Activated CD8-positive, alpha-beta memory T cell treated with anti-CD3 and anti-CD28 coated beads, Interleukin-2, amount 10 ng/mL, durations not matched to agents 7 days and 5 days (primary cell): ENCODE measurements at regions of chr3 and their contacts with region 1.

Region 1: DNA sequence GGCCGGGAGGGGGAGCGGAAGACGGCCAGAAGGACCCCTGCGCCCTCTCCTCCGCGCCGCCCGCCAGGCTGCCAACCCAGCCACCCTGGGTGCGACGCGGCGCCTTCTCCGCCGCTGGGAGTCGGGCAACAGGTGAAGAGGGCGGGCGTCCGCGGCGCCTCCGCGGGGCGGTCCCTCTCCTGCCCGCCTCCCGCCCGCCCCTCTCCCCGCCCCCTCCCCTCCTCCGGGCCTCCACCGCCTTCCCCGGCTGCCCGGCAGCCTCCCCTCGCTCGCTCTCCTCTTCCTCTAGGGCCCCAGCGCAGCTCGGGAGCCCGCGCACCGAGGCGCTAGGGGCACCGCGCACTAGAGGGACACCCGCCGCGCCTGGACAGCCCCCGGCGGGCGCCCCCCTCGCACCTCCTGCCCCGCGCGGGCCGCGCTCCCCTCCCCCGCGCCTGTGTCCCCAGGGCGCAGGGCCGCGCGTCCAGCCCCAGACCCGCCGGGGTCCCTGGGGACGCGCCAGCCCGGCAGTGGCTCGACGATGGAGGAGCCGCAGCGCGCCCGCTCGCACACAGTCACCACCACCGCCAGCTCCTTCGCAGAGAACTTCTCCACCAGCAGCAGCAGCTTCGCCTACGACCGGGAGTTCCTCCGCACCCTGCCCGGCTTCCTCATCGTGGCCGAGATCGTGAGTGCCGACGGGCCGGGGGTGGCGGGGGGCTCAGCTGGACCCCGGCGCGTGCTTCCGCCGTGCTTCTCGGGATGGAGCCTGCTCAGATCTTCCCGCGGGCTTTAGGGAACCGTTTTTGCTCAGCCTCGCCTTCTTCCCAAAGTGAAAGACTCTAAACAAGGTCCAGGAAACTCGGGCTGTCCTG is at the start of gene CMTM8:
- DNase-seq: peak; percentile 57
- ATAC-seq: peak; percentile 87
- H3K4me3 Mint-ChIP-seq: peak within 1 kb of the TSS; percentile 77
- H3K27ac Mint-ChIP-seq: no peak within 1 kb of the TSS
- H3K4me1 Mint-ChIP-seq: peaks cover 13% of the 10 kb centered on the region
- H3K27me3 Mint-ChIP-seq: peaks cover 28% of the 10 kb centered on the region
- total RNA-seq, gene CMTM8: 4.0 to 4.4 TPM

Region 2: DNA sequence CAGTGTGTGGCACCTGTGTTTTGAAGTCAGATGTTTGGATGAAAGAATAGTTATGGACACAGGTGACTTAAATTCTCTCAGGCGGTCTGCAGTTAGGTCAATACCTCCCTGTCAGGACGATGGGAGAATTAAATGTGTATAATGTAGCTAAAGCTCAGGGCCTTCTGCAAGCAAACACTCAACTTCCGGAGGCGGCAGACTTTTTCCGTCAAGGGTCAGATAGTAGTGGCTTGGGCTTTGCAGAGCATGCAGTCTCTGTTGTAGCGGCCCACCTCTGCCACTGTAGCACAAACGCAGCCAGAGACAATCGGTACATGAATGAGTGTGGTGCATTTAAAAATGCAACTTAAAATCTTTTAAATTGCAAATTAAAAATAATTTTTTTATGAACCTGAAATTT is 47.2 kb after region 1 on chr3:
- CTCF ChIA-PET with region 1: interaction called, 11 read pairs
- DNase-seq: peak; percentile 65
- ATAC-seq: peak; percentile 62
- H3K4me3 Mint-ChIP-seq: peak overlapping the region; percentile 8
- H3K27ac Mint-ChIP-seq: peak overlapping the region; percentile 83
- H3K4me1 Mint-ChIP-seq: peaks cover 31% of the 10 kb centered on the region
- H3K27me3 Mint-ChIP-seq: peaks cover 3% of the 10 kb centered on the region

Region 3: GRCh38 chr3:32423534-32423933 is 184.9 kb after region 1 on chr3:
- CTCF ChIA-PET with region 1: no interaction called
- DNase-seq: no peak
- ATAC-seq: peak; percentile 15
- H3K4me3 Mint-ChIP-seq: peak overlapping the region; percentile 66
- H3K27ac Mint-ChIP-seq: peak overlapping the region; percentile 93
- H3K4me1 Mint-ChIP-seq: peaks cover 93% of the 10 kb centered on the region
- H3K27me3 Mint-ChIP-seq: no peaks in the 10 kb centered on the region